ENCODE measurements at regions of chr1 and their contacts with region 1.

Region 1: DNA sequence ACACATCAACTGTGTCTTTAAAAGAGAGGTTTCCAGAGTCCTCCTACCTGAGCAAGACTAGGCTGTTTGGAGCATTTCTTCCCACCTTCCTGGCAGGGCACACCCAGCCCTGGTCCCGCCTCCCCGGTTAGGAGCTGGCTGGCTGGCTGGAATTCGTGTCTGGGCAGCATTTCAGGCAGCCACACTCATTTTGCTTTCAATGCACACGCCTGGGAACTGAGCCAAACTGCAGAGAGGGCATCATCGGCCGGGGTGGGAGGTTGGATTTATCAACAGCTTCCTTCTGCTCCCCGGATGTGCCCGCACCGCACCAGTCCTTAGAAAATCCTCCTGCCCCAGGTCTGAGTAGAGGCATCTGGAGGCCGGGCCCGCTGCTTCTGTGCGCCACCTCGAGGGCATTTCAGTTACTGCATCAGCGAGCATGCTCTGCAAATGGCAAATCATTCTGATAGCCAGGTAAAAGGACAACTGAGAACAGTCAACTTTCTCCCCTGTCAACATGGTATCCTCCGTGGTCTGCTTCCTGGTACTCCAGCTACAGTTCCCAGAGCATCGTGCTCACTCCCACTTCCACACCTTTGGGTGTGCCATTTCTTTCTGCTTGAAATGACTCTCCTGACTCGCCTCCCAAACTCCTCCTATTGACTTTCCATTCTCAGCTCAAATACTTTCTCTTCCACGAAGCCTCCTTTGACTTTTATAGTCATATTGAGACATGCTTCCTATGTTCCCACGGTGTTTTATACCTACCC is 20.6 kb downstream of the TCEA3 start:
- DNase-seq: peak; percentile 100
- H3K4me3 ChIP-seq: peak overlapping the region in 2 of 3 experiments; percentile 4 to 21
- H3K27ac ChIP-seq: peak overlapping the region; percentile 85
- H3K4me1 ChIP-seq: peaks cover 20% of the 10 kb centered on the region
- H3K27me3 ChIP-seq: no peaks in the 10 kb centered on the region
- CTCF ChIP-seq: peak; percentile 97 to 98

Region 2: DNA sequence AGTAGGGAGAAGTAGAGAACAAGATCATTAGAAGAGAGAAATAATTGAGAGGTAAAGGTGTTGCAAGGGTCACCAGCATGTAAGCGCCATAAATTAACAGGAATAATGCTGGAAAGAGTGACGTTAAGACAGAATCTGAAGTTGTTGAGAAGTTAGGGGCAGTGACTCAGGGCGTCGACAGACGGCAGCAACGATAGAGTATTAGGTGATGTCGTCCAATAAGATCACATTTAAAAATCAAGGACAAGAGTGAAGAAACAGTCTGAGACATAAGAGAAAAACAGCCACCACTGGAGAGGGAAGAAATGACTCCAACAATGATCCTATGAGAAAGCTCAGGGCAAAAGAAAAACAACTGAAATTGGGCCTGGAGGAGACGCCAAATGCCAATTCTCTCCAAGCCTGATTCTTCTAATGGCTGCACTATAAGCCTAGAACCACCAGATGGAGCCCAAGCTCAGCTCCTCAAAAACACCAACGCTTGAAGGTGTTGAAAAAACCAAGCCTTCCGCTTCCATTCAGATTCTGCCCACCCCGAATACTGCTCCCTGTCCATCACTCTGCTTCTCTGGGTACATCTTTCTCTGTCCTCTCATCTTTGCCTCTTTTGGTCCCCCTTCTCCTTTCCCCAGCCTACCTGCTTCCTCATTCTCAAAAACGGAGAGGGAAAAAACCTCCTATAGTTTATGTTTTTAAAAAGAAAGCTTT is 305.3 kb before region 1 on chr1:
- CTCF ChIA-PET with region 1: no interaction called
- dilution Hi-C with region 1: no loop called
- in situ Hi-C with region 1: no loop called
- intact Hi-C with region 1: loop called (anchors 5 kb)
- DNase-seq: peak; percentile 65
- H3K4me3 ChIP-seq: no peak overlapping the region
- H3K27ac ChIP-seq: no peak overlapping the region
- H3K4me1 ChIP-seq: peaks cover 59% of the 10 kb centered on the region
- H3K27me3 ChIP-seq: no peaks in the 10 kb centered on the region
- CTCF ChIP-seq: peak; percentile 92 to 93

Region 3: GRCh38 chr1:23216771-23217420 is 187.0 kb before region 1 on chr1:
- CTCF ChIA-PET with region 1: no interaction called
- dilution Hi-C with region 1: no loop called
- in situ Hi-C with region 1: no loop called
- intact Hi-C with region 1: loop called (anchors 2 kb)
- DNase-seq: no peak
- H3K4me3 ChIP-seq: peak overlapping the region; percentile 39 to 50 (median 47)
- H3K27ac ChIP-seq: no peak overlapping the region
- H3K4me1 ChIP-seq: no peaks in the 10 kb centered on the region
- H3K27me3 ChIP-seq: no peaks in the 10 kb centered on the region
- CTCF ChIP-seq: peak; percentile 21 to 54

Region 4: DNA sequence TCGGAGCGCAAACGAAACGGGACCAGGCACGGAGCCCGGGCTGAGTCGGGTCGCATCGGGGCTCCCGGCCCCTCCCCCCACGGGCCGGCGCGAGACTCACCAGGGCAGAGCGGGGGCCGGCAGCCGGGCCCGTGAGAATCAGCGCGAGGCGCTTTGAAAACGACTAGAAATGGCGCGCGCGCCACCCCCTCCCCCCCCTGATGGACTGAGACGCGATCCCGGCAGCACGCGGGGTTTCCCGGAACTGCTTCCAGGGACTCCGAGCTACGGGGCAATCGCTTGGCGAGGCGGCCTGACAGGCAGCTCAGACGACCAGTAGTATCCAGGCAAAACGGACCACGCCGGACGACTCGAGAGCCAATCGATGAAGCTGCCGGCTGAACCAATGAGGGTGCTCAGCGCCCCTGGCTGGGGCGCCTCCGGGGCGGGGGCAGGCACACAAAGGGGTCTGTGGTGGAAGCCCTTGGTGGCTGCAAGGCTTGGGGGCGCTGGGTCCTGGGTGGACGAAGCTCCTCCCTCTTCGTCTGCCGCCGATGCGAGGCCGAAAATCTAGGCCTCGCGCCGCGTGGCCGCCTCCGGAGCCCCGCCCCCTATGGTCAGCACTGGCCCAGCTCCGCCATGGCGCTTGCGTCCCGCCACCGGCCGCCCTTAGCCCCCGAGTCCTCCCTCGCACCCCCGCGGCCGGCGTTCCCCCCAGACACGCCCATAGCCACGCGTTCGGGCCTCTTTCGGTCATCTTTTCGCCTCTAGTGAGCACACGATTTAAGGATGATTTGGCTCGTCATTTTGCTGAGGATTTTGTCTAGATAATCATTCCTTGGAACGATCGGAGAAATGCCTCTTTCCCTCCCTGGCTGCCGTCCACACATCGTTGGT is 59.6 kb before region 1 on chr1 and contains the start of gene HNRNPR:
- CTCF ChIA-PET with region 1: interaction called, 17 read pairs
- dilution Hi-C with region 1: no loop called
- in situ Hi-C with region 1: loop called in 1 of 2 experiments (anchors 5 kb)
- intact Hi-C with region 1: loop called (anchors 1 kb)
- DNase-seq: peak; percentile 100
- H3K4me3 ChIP-seq: peak within 1 kb of the TSS; percentile 78 to 89 (median 83)
- H3K27ac ChIP-seq: peak within 1 kb of the TSS; percentile 88
- H3K4me1 ChIP-seq: peaks cover 15% of the 10 kb centered on the region
- H3K27me3 ChIP-seq: no peaks in the 10 kb centered on the region
- CTCF ChIP-seq: peak in 1 of 2 donors; percentile 13
- total RNA-seq, gene HNRNPR: 35.2 to 133 TPM

Region 5: DNA sequence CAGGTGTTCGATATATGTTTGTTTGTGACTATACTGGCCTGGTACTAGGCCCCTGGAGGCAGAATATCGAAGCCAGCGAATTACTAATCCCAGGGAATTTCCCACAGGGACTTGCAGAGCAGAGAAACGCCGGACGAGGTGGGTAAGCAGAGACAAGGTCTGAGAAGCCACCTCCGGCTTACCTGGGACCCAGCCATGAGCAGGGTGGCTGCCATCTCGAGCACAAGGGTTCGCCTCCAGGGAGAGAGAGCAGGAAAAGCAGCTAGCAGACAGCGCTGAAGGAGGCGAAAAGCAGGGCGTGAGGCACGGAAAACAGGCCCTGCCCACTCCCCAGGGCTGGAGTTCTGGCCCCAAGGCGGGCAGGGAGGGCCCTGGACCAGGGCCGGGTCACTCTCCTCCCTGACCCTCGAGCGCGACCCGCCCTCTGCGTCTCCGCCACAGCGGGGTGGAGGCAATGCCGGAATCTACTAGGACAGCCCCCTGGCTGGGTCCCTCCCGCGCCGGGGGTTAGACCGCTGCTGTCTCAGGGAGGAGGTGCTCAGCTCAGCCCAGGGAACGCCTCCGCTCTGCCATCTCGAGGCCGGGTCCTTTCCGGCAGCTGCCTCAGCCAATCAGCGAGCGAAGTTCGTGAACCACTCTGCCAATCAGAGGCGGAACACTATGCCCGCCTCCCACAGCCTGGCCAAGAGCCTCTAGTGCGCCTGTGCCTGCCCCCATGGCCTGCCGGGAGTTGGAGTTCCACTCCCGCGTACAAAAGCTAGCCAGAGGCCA is 35.9 kb before region 1 on chr1:
- CTCF ChIA-PET with region 1: interaction called, 12 read pairs
- dilution Hi-C with region 1: no loop called
- in situ Hi-C with region 1: no loop called
- intact Hi-C with region 1: loop called (anchors 1 kb)
- DNase-seq: peak; percentile 98
- H3K4me3 ChIP-seq: peak overlapping the region; percentile 55 to 83 (median 79)
- H3K27ac ChIP-seq: peak overlapping the region; percentile 86
- H3K4me1 ChIP-seq: peaks cover 44% of the 10 kb centered on the region
- H3K27me3 ChIP-seq: no peaks in the 10 kb centered on the region
- CTCF ChIP-seq: no peak

Region 6: GRCh38 chr1:23384302-23385058 is 19.4 kb before region 1 on chr1:
- CTCF ChIA-PET with region 1: no interaction called
- dilution Hi-C with region 1: no loop called
- in situ Hi-C with region 1: no loop called
- intact Hi-C with region 1: loop called (anchors 1 kb)
- DNase-seq: peak; percentile 77
- H3K4me3 ChIP-seq: no peak overlapping the region
- H3K27ac ChIP-seq: peak overlapping the region; percentile 19
- H3K4me1 ChIP-seq: peaks cover 27% of the 10 kb centered on the region
- H3K27me3 ChIP-seq: no peaks in the 10 kb centered on the region
- CTCF ChIP-seq: no peak

Region 7: GRCh38 chr1:23470282-23471071 is 66.6 kb after region 1 on chr1:
- CTCF ChIA-PET with region 1: no interaction called
- dilution Hi-C with region 1: no loop called
- in situ Hi-C with region 1: no loop called
- intact Hi-C with region 1: no loop called
- DNase-seq: peak; percentile 63
- H3K4me3 ChIP-seq: no peak overlapping the region
- H3K27ac ChIP-seq: no peak overlapping the region
- H3K4me1 ChIP-seq: peaks cover 38% of the 10 kb centered on the region
- H3K27me3 ChIP-seq: no peaks in the 10 kb centered on the region
- CTCF ChIP-seq: no peak

Region 8: DNA sequence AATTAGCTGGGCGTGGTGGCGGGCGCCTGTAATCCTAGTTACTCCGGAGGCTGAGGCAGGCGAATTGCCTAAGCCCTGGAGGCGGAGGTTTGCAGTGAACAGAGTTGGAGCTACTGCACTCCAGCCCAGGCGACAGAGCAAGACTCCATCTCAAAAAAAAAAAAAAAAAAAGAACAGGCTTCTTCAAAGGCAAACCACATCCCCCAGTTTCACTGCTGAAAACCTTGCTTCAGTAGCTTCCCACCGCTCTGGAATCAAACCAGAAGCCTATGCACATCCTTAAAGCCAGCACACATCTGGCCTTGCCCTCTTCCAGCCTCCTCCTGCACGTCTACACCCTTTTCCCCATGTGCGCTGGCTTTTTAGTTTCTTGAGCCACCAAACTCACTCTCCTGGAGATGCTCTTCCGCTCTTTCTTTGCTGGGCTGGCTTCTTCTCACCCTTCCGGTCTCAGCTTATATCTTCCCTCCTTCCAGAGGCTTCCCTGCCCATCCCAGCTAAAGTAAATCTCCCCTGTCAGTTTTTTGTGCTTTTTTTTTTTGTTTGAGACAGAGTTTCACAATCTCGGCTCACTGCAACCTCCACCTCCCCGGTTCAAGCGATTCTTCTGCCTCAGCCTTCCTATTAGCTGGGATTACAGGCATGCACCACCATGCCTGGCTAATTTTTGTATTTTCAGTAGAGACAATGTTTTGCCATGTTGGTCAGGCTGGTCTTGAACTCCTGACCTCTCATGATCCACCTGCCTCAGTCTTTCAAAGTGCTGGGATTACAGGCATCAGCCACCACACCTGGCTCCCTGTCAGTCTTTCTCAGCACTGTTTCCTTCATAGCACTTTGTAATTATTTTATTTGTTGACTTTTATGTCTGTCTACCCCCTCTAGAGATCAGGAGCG is 197.4 kb after region 1 on chr1:
- CTCF ChIA-PET with region 1: no interaction called
- dilution Hi-C with region 1: no loop called
- in situ Hi-C with region 1: no loop called
- intact Hi-C with region 1: no loop called
- DNase-seq: no peak
- H3K4me3 ChIP-seq: no peak overlapping the region
- H3K27ac ChIP-seq: no peak overlapping the region
- H3K4me1 ChIP-seq: no peaks in the 10 kb centered on the region
- H3K27me3 ChIP-seq: no peaks in the 10 kb centered on the region
- CTCF ChIP-seq: no peak

Region 9: DNA sequence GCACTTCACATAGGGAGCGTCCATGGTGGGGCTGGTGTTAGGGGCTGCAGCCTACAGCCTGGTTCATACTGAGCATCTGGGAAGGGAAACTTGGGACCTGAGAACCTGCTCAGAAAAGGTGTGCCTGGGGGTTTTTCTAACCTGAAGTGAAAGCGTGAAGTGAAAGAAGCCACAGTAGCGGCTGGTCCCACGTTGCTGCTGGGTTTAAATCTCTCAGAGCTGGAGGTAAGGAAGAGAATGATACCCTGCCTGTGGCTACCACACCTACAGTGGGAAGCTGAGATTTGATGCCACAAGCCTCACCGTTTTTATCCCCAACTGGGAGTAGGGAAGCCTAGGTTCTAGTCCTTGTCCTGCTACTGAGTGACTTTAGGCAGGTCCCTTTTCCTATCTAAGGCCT is 485.2 kb after region 1 on chr1:
- CTCF ChIA-PET with region 1: no interaction called
- dilution Hi-C with region 1: no loop called
- in situ Hi-C with region 1: no loop called
- intact Hi-C with region 1: no loop called
- DNase-seq: no peak
- H3K4me3 ChIP-seq: no peak overlapping the region
- H3K27ac ChIP-seq: no peak overlapping the region
- H3K4me1 ChIP-seq: no peaks in the 10 kb centered on the region
- H3K27me3 ChIP-seq: no peaks in the 10 kb centered on the region
- CTCF ChIP-seq: no peak